ENCODE measurements at regions of chr12 and their contacts with region 1.

Region 1: DNA sequence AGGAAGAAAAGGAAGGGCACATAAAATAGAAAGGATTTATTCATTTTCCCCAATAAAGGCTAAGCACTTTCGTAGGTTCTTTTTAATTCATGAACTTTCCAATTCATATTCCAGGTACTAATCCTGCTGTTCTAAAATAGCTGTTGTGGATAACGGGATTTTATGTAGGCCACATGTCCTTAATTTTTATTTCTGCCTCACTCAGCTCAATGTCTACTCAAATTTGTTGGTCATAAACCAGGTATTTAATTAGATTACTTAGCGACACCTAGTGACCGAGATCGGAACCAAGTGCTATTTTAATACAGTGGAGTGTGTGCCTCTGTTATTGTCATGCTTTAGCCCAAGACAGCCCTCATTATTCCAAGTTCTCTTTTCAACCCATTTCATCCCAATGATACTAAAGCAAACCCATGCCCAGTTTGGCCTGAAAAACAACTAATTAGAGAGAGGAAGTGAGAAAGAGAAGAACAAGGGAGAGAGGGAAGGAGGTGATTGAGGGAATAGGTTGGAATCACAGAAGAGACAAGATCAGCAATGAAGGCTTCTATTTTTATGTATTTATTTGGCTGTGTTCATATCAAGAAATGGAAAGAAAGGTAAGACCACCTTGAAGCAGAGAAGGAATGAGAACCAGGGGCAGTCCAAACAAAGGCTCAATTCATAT is 45.9 kb upstream of the IFNG-AS1 start:
- DNase-seq: peak; percentile 89
- H3K4me3 Mint-ChIP-seq: no peak overlapping the region
- H3K27ac Mint-ChIP-seq: no peak overlapping the region
- H3K4me1 Mint-ChIP-seq: no peaks in the 10 kb centered on the region
- H3K27me3 Mint-ChIP-seq: peaks cover 27% of the 10 kb centered on the region

Region 2: GRCh38 chr12:67161322-67161918 is 781.9 kb before region 1 on chr12:
- intact Hi-C with region 1: loop called (anchors 5 kb)
- DNase-seq: peak; percentile 79
- H3K4me3 Mint-ChIP-seq: no peak overlapping the region
- H3K27ac Mint-ChIP-seq: no peak overlapping the region
- H3K4me1 Mint-ChIP-seq: no peaks in the 10 kb centered on the region
- H3K27me3 Mint-ChIP-seq: peaks cover 11% of the 10 kb centered on the region

Region 3: GRCh38 chr12:67452119-67452805 is 491.1 kb before region 1 on chr12:
- intact Hi-C with region 1: loop called (anchors 5 kb)
- DNase-seq: no peak
- H3K4me3 Mint-ChIP-seq: peak overlapping the region; percentile 16
- H3K27ac Mint-ChIP-seq: peak overlapping the region; percentile 85
- H3K4me1 Mint-ChIP-seq: peaks cover 40% of the 10 kb centered on the region
- H3K27me3 Mint-ChIP-seq: peaks cover 44% of the 10 kb centered on the region

Region 4: DNA sequence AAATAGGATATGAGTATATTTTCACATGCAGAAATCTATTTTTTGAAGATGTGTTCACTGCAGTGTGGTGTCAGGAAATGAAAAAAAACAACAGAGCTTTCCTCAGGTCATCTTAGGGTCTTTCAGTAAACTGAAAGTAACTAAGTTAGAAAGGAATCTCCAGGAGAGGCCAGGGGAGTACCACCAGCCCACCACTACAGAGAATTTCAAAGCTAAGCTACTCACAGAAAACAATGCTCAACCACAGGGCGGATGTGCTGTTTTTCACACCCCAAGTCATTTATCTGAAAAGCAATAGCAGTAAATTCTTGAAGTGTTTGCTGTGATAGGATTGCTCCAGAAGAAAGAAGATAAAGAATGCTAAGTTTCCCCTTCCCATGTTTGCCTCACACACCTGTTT is 137.2 kb after region 1 on chr12:
- intact Hi-C with region 1: no loop called
- DNase-seq: peak; percentile 79
- H3K4me3 Mint-ChIP-seq: peak overlapping the region; percentile 59
- H3K27ac Mint-ChIP-seq: peak overlapping the region; percentile 84
- H3K4me1 Mint-ChIP-seq: peaks cover 34% of the 10 kb centered on the region
- H3K27me3 Mint-ChIP-seq: no peaks in the 10 kb centered on the region

Measured in activated CD4-positive, alpha-beta T cell treated with anti-CD3 and anti-CD28 coated beads, Interleukin-2, amount 10 ng/mL, durations not matched to agents 24 days and 14 days (primary cell).